RWPE1 (cell line): ENCODE measurements at regions of chr2 and their contacts with region 1.

Region 1: GRCh38 chr2:74482801-74483674 is at the starts of genes CCDC142 and TTC31:
- DNase-seq: peak; percentile 93
- H3K27ac ChIP-seq: peak within 1 kb of the TSS; percentile 90
- CTCF ChIP-seq: peak; percentile 89

Region 2: GRCh38 chr2:74529357-74530238 is 46.6 kb after region 1 on chr2 and contains the starts of genes AUP1 and HTRA2:
- CTCF ChIA-PET with region 1: interaction called, 41 read pairs
- POLR2A ChIA-PET with region 1: interaction called, 3 read pairs
- DNase-seq: peak; percentile 99
- H3K27ac ChIP-seq: peak within 1 kb of the TSS; percentile 83
- CTCF ChIP-seq: no peak

Region 3: DNA sequence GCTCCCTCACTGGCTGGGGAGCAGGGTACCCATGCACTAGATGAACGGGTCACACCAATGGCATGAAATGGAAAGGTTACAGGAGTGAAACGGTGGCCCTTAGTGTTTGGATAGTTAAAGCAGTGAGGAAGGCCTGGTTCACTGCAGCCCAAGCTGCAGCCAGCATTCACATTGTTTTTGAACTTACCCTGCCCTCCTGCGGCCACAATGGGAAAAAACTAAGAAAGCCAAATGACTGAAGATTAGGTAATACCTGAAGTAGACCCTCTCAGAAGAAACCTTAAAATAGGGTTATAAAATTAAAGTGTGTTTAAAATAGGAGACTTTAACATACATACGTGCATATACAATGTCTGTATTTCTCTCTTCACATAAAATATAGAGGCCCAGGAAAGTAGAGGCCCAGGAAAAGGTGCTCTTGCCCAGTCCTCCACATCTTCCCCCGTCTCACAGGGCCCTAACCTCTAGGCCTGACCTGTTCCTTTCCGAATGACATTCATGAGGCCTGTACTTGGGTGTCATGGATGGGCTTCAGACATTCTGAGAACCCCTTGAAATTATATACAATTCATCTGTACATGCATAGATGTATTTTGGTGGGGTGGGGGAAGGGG is 104.7 kb after region 1 on chr2:
- CTCF ChIA-PET with region 1: interaction called, 16 read pairs
- POLR2A ChIA-PET with region 1: no interaction called
- DNase-seq: peak; percentile 80
- H3K27ac ChIP-seq: no peak overlapping the region
- CTCF ChIP-seq: peak; percentile 72